ENCODE measurements at regions of chr2 and their contacts with region 1.

Region 1: DNA sequence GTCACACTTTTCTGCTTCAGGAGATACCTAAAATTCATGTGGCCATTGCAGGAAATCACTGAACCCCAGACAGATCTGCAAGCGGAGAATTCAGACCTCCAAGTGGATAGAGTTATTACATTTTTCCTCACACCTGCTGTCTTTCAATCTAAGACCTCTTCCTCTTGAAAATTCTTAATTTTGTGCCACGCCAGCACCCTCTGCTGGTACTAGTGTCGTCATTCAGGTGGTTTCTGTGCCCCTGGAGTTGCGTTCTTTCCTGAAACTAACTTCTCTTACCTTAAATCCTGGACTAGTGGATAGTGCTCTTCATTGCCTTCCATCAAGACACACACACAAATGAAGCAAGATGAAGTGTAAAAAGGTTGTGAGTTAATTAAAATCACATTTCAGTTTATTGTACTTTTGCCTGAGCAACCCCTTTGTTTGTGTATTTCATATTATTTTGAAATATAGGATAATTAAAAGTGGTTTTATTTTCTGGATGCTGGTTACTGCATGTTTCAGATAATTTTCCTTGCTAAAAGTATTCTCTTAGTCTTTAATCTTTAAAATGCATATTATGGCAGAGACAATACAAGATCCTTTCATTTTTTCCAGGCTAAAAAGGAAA is 1.6 kb upstream of the DNER start:
- H3K4me3 ChIP-seq: no peak overlapping the region
- H3K27ac ChIP-seq: no peak overlapping the region
- H3K4me1 ChIP-seq: peaks cover 3% of the 10 kb centered on the region; the same call in 1 of the 2 replicates
- CTCF ChIP-seq: peak; percentile 36

Region 2: DNA sequence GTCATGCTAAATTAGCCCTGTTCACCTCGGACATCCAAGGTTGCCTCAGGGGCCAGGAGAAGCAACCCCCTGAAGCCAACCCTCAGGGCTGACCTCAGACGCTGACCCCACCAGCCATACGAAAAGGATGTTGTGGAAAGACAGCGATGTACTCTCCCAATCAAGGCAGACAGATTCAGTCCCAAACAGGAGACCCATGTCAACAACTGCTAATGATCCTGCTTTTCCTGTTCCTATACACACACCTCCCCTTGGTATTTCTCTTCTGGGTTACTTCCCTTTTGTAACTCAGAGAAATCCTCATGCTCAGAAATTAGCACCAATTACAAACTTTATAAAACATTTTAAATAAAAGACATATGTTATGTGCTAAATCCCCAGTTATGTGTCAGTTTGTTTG is 565.7 kb before region 1 on chr2:
- CTCF ChIA-PET with region 1: no interaction called
- POLR2A ChIA-PET with region 1: no interaction called
- H3K4me3 ChIP-seq: no peak overlapping the region
- H3K27ac ChIP-seq: no peak overlapping the region
- H3K4me1 ChIP-seq: no peaks in the 10 kb centered on the region
- CTCF ChIP-seq: no peak

Region 3: GRCh38 chr2:229691631-229692030 is 24.4 kb before region 1 on chr2:
- CTCF ChIA-PET with region 1: no interaction called
- POLR2A ChIA-PET with region 1: no interaction called
- H3K4me3 ChIP-seq: no peak overlapping the region
- H3K27ac ChIP-seq: no peak overlapping the region
- H3K4me1 ChIP-seq: no peaks in the 10 kb centered on the region
- CTCF ChIP-seq: no peak

Region 4: GRCh38 chr2:229701716-229702115 is 14.3 kb before region 1 on chr2:
- CTCF ChIA-PET with region 1: interaction called, 15 read pairs
- POLR2A ChIA-PET with region 1: no interaction called
- H3K4me3 ChIP-seq: no peak overlapping the region
- H3K27ac ChIP-seq: no peak overlapping the region
- H3K4me1 ChIP-seq: no peaks in the 10 kb centered on the region
- CTCF ChIP-seq: no peak

Measured in HEK293 (cell line).